Activated CD4-positive, alpha-beta T cell treated with anti-CD3 and anti-CD28 coated beads for 36 hours (primary cell): ENCODE measurements at regions of chr7 and their contacts with region 1.

Region 1: DNA sequence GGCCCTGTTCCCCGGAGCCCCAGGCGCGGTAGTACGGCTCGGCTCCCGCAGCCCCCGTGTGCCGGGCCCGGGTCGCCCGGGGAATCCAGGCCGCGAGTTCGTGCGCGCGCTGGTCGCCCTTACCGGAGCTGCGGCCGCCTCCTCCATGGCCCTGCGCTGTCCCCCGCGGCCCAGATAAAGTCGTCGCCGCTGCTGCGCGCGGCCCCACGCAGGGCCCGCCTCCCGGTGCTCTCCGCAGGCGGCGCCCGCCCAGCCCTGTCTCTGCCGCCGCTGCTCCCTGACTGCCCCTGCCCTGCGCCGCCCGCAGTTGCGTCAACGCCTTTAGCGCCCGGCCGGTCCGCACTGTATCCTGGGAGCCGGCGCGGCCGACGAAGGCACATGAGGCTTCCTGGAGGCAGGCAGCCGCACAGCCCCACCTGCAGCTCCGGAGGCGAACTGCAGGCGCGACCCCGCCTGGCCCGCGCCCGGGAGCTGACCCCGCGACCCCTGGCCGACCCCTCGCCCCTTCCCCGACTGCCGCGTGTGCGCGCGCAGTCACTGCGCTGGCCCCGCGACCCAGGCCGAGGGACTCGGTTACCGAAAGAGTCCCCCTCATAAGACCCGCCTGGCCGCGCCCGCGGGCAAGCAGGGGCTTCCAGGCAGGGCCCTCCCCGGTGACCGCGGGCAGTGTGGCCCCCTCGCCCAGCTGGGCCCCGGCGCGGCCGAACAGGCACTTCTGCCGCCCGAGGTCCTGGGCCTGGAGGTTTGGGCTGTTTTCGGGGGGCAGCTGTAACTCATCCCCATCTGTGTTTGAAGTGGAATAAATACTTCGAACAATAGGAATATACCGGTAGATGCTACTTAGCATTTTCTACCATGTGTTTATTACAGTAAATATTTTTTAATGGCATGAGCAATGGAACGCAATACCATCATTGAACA is 127.1 kb upstream of the ZNF746 start:
- DNase-seq: peak; percentile 95
- ATAC-seq: peak; percentile 86
- H3K4me3 Mint-ChIP-seq: peak overlapping the region; percentile 80
- H3K27ac Mint-ChIP-seq: peak overlapping the region; percentile 80
- H3K4me1 Mint-ChIP-seq: peaks cover 38% of the 10 kb centered on the region
- H3K27me3 Mint-ChIP-seq: peaks cover 3% of the 10 kb centered on the region

Region 2: DNA sequence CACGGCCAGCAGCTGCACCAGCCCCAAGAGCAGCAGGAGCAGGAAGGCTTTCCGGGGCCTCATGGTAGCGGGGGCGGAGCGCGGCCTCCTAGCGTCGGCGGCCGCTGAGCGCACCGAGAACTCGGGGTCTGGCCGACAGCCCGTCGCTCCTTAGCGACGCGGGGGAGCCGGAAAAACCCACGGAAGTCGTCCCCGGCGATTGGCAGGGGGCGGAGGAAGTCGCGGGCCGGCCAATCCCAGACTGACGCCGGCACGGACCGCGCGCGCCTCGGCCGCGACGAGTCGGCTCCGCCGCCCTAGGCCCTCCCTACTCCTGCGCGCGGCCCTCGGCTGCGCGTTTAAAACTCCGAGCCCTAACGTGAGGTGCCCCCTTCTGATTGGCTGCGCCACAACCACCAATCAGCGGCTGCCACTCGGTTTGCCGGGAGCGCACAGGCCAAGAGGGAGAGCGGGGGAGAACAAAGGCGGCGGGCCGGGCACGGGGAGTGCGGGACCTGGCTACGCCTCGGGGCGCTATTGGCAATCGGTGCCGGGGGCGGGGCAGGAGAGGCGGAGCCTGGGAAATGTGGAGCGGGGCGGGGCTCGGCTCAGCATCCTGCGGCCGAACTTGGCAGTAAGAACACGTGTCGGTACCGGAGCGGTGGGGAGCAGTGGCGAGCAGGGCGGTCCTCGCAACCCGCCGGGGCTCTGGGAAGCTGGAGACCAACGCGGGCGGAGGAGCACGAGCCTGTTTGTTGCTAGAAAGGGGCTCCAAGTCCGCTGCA is 596.2 kb before region 1 on chr7 and contains the start of gene PDIA4:
- CTCF ChIA-PET with region 1: no interaction called
- POLR2A ChIA-PET with region 1: no interaction called
- intact Hi-C with region 1: loop called in 1 of 2 experiments (anchors 2 kb)
- DNase-seq: peak; percentile 100
- ATAC-seq: peak; percentile 92
- H3K4me3 Mint-ChIP-seq: peak within 1 kb of the TSS; percentile 99
- H3K27ac Mint-ChIP-seq: peak within 1 kb of the TSS; percentile 94
- H3K4me1 Mint-ChIP-seq: peaks cover 32% of the 10 kb centered on the region
- H3K27me3 Mint-ChIP-seq: no peaks in the 10 kb centered on the region
- total RNA-seq, gene PDIA4: 88.3 to 90.1 TPM

Region 3: GRCh38 chr7:149147072-149147751 is 477.5 kb before region 1 on chr7 and contains the start of gene ZNF398:
- CTCF ChIA-PET with region 1: interaction called, 3 read pairs
- POLR2A ChIA-PET with region 1: interaction called, 3 read pairs
- intact Hi-C with region 1: loop called in 1 of 2 experiments (anchors 5 kb)
- DNase-seq: peak; percentile 87
- ATAC-seq: peak; percentile 71
- H3K4me3 Mint-ChIP-seq: peak within 1 kb of the TSS; percentile 98
- H3K27ac Mint-ChIP-seq: peak within 1 kb of the TSS; percentile 99
- H3K4me1 Mint-ChIP-seq: peaks cover 34% of the 10 kb centered on the region
- H3K27me3 Mint-ChIP-seq: no peaks in the 10 kb centered on the region
- total RNA-seq, gene ZNF398: 9.6 to 10.5 TPM

Region 4: DNA sequence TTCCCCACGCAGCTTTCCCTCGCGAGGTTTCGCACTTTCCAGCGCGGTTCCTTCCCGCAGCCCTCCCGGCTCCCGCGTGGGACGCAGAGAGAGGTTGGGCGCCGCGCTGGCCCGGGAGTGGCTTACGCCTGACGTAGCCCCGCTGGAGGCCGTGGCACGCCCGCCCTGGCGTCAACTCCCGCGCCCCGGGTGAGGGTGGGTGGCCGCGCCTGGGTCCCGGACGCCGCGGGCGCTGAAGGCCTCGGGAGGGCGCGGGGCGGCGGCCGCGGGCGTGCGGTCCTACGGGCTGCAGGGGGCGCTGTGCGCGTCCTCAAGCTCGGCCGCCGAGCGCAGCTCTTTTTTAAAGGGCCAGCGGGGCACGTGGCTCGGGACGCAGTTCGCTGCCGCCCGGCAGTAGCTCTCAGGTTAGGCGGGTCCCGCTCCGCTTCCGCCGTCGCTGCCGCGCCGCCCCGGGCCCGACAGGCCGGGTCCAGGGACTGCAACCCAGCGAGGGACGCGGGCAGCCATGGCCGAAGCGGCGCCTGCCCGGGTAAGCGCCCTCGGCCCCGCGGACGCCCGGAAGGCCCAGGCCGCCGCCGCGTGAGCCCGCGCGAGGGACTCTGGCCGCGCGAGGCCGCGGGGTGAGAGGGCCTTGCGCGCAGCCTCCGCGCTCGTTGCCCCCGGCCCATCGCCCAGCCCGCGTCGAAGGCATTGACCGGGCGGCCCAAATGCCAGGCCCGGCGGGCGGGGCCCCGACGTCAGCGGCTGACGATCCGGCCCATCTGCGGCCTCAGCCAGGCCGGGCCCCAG is 362.7 kb before region 1 on chr7 and contains the start of gene ZNF783:
- CTCF ChIA-PET with region 1: interaction called, 4 read pairs
- POLR2A ChIA-PET with region 1: no interaction called
- intact Hi-C with region 1: loop called in 1 of 2 experiments (anchors 5 kb)
- DNase-seq: peak; percentile 92
- ATAC-seq: peak; percentile 84
- H3K4me3 Mint-ChIP-seq: peak within 1 kb of the TSS; percentile 74
- H3K27ac Mint-ChIP-seq: peak within 1 kb of the TSS; percentile 96
- H3K4me1 Mint-ChIP-seq: peaks cover 40% of the 10 kb centered on the region
- H3K27me3 Mint-ChIP-seq: no peaks in the 10 kb centered on the region
- total RNA-seq, gene ZNF783: 14.5 to 15.4 TPM

Region 5: GRCh38 chr7:149569025-149569725 is 55.5 kb before region 1 on chr7:
- CTCF ChIA-PET with region 1: no interaction called
- POLR2A ChIA-PET with region 1: no interaction called
- intact Hi-C with region 1: no loop called
- DNase-seq: no peak
- ATAC-seq: no peak
- H3K4me3 Mint-ChIP-seq: no peak overlapping the region
- H3K27ac Mint-ChIP-seq: no peak overlapping the region
- H3K4me1 Mint-ChIP-seq: peaks cover 4% of the 10 kb centered on the region
- H3K27me3 Mint-ChIP-seq: no peaks in the 10 kb centered on the region

Region 6: DNA sequence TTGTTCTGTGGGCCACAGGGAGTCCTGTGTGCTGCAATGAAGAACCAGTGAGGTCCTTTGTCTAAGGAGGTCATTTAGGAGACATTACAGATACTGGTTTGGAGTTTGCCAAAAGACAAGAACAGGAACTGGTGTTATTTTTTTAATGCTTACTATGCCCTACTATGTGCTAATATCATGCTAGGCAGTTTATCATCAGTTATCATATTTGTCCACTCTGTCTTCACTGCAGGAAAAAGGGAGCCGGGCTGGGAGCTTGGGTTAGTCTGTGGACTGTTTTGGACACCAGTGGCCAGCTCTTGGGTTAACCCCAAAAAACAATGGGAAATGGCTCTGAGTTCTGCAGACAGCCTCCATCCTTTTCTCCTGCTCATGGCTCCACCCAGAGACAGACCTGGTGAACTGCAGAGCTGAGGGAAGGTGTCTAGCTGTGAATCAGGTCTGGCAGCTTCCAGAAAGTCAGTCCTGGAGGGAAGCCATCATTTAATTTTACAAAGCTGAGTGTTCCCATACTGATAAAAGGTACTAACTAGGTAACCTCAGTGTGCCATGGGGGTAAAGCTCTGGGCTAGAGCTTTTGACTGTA is 25.9 kb before region 1 on chr7:
- CTCF ChIA-PET with region 1: interaction called, 7 read pairs
- POLR2A ChIA-PET with region 1: interaction called, 4 read pairs
- intact Hi-C with region 1: loop called (anchors 1 kb)
- DNase-seq: peak; percentile 65
- ATAC-seq: peak; percentile 38
- H3K4me3 Mint-ChIP-seq: no peak overlapping the region
- H3K27ac Mint-ChIP-seq: no peak overlapping the region
- H3K4me1 Mint-ChIP-seq: peaks cover 34% of the 10 kb centered on the region
- H3K27me3 Mint-ChIP-seq: no peaks in the 10 kb centered on the region

Region 7: DNA sequence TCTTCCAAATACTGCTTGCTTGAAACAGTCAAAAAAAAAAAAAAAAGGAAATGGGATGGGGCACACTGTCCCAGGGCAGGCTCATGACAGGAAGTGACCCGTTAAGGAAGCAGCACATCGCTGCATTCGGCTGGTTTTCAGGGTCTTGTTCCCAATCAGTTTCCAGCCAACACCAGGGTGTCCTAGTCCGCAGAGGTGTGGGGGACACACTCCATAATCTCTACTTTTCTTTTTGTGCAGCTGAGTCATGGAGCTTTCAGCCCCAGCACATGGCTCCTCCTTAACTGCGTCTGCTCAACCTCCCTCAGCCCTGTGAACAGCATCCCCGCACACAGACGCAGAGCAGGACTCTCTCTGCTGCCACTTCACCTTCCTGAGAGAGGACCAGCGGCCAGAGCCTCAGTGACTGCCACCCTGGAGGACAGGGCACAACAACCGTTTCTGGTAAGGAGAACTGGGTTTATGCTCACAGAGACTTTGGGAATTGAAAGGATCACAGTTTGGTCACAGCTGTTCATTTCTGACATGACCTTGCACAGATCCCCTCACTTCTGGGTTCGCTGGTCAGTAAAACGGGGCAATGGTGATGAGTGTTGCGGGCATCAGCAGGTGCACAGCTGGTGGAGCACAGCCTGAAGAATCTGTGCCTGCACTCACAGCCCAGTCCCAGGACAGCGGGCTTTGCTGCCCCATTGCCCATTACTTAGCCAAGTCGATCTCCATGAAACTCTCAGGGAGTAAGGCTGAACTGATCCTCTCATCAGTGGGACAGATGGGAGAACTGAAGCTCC is 1112.8 kb after region 1 on chr7 and contains the start of gene GIMAP5:
- CTCF ChIA-PET with region 1: no interaction called
- POLR2A ChIA-PET with region 1: no interaction called
- intact Hi-C with region 1: loop called in 1 of 2 experiments (anchors 5 kb)
- DNase-seq: peak; percentile 75
- ATAC-seq: peak; percentile 68
- H3K4me3 Mint-ChIP-seq: peak within 1 kb of the TSS; percentile 86
- H3K27ac Mint-ChIP-seq: peak within 1 kb of the TSS; percentile 98
- H3K4me1 Mint-ChIP-seq: peaks cover 74% of the 10 kb centered on the region
- H3K27me3 Mint-ChIP-seq: no peaks in the 10 kb centered on the region
- total RNA-seq, gene GIMAP5: 47.6 to 53.3 TPM